ENCODE measurements at regions of chr6 and their contacts with region 1.

Region 1: GRCh38 chr6:11381801-11382513 is 149.5 kb upstream of the NEDD9 start:
- DNase-seq: peak; percentile 43 to 88 (median 82)
- ATAC-seq: peak; percentile 95
- H3K4me3 ChIP-seq: peak overlapping the region; percentile 70
- H3K4me3 Mint-ChIP-seq: peak overlapping the region; percentile 76 to 96 (median 91)
- H3K27ac ChIP-seq: peak overlapping the region; percentile 79
- H3K27ac Mint-ChIP-seq: peak overlapping the region; percentile 79 to 94 (median 91)
- H3K4me1 ChIP-seq: peaks cover 23 to 28% of the 10 kb centered on the region in 2 donors
- H3K4me1 Mint-ChIP-seq: peaks cover 42 to 85% (median 66%) of the 10 kb centered on the region in 7 donors
- H3K27me3 ChIP-seq: no peaks in the 10 kb centered on the region
- H3K27me3 Mint-ChIP-seq: no peaks in the 10 kb centered on the region

Region 2: GRCh38 chr6:11198663-11199603 is 183.0 kb before region 1 on chr6:
- CTCF ChIA-PET with region 1: no interaction called
- POLR2A ChIA-PET with region 1: no interaction called
- intact Hi-C with region 1: loop called in 1 of 2 experiments (anchors 2 kb)
- DNase-seq: peak in 8 of 9 donors; percentile 23 to 73 (median 58)
- ATAC-seq: peak; percentile 77
- H3K4me3 ChIP-seq: no peak overlapping the region
- H3K4me3 Mint-ChIP-seq: peak overlapping the region; percentile 19 to 61 (median 52)
- H3K27ac ChIP-seq: peak overlapping the region; percentile 6
- H3K27ac Mint-ChIP-seq: peak overlapping the region; percentile 57 to 90 (median 73)
- H3K4me1 ChIP-seq: peaks cover 11 to 44% of the 10 kb centered on the region in 2 donors
- H3K4me1 Mint-ChIP-seq: peaks cover 36 to 81% (median 62%) of the 10 kb centered on the region in 7 donors
- H3K27me3 ChIP-seq: no peaks in the 10 kb centered on the region
- H3K27me3 Mint-ChIP-seq: no peaks in the 10 kb centered on the region

Region 3: DNA sequence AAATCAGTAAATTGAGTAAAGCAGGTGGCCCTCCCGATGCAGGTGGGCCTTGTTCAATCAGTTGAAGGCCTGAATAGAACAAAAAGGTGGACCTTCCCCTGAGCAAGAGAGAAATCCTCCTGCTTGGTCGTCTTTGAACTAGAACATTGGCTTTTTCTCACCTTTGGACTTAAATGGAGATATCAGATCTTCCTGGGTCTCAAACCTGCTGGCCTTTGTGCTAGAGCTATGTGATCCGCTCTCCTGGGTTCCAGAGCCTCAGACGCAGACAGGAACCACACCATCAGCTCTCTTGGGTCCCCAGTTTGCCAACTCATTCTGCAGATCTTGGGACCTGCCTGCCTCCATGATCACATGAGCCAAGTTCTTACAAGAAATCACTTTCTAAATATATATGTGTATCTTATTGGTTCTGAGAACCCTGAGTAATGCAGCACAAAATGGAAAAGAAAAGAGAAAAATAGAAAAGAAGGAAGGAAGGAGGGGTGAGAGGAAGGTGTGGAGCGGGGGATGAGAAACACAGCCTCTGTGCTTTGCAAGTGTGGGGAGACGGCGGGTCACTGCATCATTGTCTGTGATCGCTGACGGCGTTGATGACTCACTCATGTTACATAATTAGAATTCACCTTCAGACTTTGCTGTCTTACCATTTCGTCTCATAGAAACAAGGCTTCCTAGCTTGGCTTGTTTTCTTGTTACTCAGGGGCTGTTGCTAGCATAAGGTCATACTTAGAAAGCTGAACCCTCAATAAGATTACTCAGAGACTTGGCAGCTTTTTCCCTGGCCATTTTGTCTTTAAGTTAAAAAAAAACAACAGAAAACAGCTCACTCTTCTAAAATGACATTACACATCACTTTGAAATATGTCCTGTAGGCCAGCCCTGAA is 63.8 kb before region 1 on chr6:
- CTCF ChIA-PET with region 1: no interaction called
- POLR2A ChIA-PET with region 1: no interaction called
- intact Hi-C with region 1: loop called in 1 of 2 experiments (anchors 1 kb)
- DNase-seq: peak in 6 of 9 donors; percentile 2 to 53 (median 14)
- ATAC-seq: peak; percentile 90
- H3K4me3 ChIP-seq: no peak overlapping the region
- H3K4me3 Mint-ChIP-seq: peak overlapping the region in 1 of 10 donors; percentile 8
- H3K27ac ChIP-seq: no peak overlapping the region
- H3K27ac Mint-ChIP-seq: peak overlapping the region in 6 of 9 donors; percentile 8 to 62 (median 31)
- H3K4me1 ChIP-seq: peaks cover 0 to 10% of the 10 kb centered on the region in 2 donors
- H3K4me1 Mint-ChIP-seq: peaks cover 13 to 51% (median 30%) of the 10 kb centered on the region in 7 donors
- H3K27me3 ChIP-seq: no peaks in the 10 kb centered on the region
- H3K27me3 Mint-ChIP-seq: no peaks in the 10 kb centered on the region

Region 4: GRCh38 chr6:11353921-11354389 is 28.0 kb before region 1 on chr6:
- CTCF ChIA-PET with region 1: no interaction called
- POLR2A ChIA-PET with region 1: interaction called, 8 read pairs
- intact Hi-C with region 1: loop called in 1 of 2 experiments (anchors 1 kb)
- DNase-seq: peak in 8 of 9 donors; percentile 26 to 76 (median 53)
- ATAC-seq: peak; percentile 46
- H3K4me3 ChIP-seq: no peak overlapping the region
- H3K4me3 Mint-ChIP-seq: peak overlapping the region; percentile 22 to 73 (median 62)
- H3K27ac ChIP-seq: peak overlapping the region; percentile 36
- H3K27ac Mint-ChIP-seq: peak overlapping the region; percentile 21 to 88 (median 79)
- H3K4me1 ChIP-seq: peaks cover 23 to 31% of the 10 kb centered on the region in 2 donors
- H3K4me1 Mint-ChIP-seq: peaks cover 63 to 92% (median 85%) of the 10 kb centered on the region in 7 donors
- H3K27me3 ChIP-seq: no peaks in the 10 kb centered on the region
- H3K27me3 Mint-ChIP-seq: no peaks in the 10 kb centered on the region

Region 5: DNA sequence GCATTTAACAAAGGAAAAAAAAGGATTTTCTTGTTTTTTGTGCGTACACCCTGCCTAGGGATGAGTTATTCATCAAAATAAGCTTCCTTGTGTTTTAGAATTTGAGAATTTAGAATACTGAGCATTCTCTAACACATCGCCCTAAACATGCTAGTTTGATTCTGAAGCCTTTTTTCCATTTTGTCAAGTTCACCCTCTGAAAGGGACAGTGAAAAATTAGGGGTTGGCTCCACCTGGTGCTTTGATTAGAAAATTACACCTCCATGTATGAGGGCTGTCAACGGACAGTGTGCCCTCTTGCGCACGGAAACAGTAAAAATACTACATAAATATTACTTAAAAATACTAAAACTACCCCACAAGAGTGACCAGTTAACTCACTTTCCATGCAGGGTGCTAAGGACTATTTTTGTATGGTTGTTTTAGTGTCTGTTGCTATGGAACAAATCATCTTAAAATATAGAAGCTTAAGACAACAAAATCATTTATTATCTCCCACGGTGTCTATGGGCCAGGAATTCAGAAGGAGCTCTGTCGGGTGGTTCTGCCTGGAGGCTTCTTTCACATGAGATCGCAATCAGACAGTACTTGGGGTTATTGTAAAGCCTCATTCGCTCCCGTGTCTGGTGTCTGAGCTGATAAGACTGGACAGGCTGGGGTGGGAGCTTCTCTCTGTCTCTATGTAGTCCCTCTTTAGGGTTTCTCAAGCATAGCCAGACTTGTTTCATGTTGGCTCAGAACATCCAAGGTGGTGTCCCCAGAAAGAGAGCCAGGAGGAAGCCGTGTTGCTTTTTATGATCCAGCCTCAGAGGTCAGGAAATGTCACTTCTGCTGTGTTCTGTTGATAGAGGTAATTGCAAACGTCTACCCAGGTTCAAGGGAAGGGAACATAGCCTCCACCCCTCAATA is 114.4 kb after region 1 on chr6:
- CTCF ChIA-PET with region 1: no interaction called
- POLR2A ChIA-PET with region 1: no interaction called
- intact Hi-C with region 1: loop called (anchors 1 to 5 kb)
- DNase-seq: peak; percentile 35 to 85 (median 78)
- ATAC-seq: peak; percentile 95
- H3K4me3 ChIP-seq: no peak overlapping the region
- H3K4me3 Mint-ChIP-seq: no peak overlapping the region
- H3K27ac ChIP-seq: no peak overlapping the region
- H3K27ac Mint-ChIP-seq: no peak overlapping the region
- H3K4me1 ChIP-seq: peaks cover 0 to 10% of the 10 kb centered on the region in 2 donors
- H3K4me1 Mint-ChIP-seq: peaks cover 0 to 3% (median 0%) of the 10 kb centered on the region in 7 donors
- H3K27me3 ChIP-seq: no peaks in the 10 kb centered on the region
- H3K27me3 Mint-ChIP-seq: no peaks in the 10 kb centered on the region